K562 (cell line): ENCODE measurements at regions of chr4 and their contacts with region 1.

Region 1: GRCh38 chr4:107579099-107579498 is 140.9 kb downstream of the PAPSS1 start:
- DNase-seq: peak in 2 of 4 experiments; percentile 25 to 26
- ATAC-seq: peak; percentile 95
- H3K4me3 ChIP-seq: no peak overlapping the region
- H3K27ac ChIP-seq: no peak overlapping the region
- H3K4me1 ChIP-seq: peaks cover 0 to 3% of the 10 kb centered on the region in 2 experiments; a peak in 1 of 5 replicates
- H3K27me3 ChIP-seq: peaks cover 0 to 5% of the 10 kb centered on the region in 2 experiments; a peak in 2 of 5 replicates
- CTCF ChIP-seq: peak; percentile 51 to 79 (median 59)
- EP300 ChIP-seq: no peak
- POLR2A ChIP-seq: no peak
- RAD21 ChIP-seq: peak; percentile 67 to 84

Region 2: DNA sequence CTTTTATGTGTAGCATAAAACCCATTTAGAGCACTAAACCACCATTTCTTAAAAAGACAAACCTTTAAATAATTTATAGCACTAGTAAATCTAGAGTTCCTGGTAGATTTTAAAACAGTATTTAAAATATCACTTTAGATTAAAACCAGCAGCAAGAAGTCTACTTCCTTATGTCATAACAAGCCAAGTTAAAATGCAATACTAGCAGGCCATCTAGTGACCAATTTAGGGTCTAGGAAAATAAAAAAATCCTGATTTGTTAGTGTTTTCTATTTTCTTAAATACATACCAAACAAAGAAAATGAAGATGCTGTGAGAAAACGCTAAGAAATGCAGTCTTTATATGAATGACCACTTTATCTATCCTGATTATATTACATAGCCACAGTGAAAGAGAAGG is 87.0 kb after region 1 on chr4:
- CTCF ChIA-PET with region 1: no interaction called
- POLR2A ChIA-PET with region 1: no interaction called
- in situ Hi-C with region 1: no loop called
- intact Hi-C with region 1: loop called (anchors 2 kb)
- DNase-seq: no peak
- ATAC-seq: no peak
- H3K4me3 ChIP-seq: no peak overlapping the region
- H3K27ac ChIP-seq: no peak overlapping the region
- H3K4me1 ChIP-seq: no peaks in the 10 kb centered on the region
- H3K27me3 ChIP-seq: no peaks in the 10 kb centered on the region
- CTCF ChIP-seq: peak in 1 of 3 experiments; percentile 45; a peak in 3 of 6 replicates
- EP300 ChIP-seq: no peak
- POLR2A ChIP-seq: no peak
- RAD21 ChIP-seq: peak; percentile 37 to 65

Region 3: GRCh38 chr4:107699466-107700206 is 120.5 kb after region 1 on chr4:
- CTCF ChIA-PET with region 1: no interaction called
- POLR2A ChIA-PET with region 1: no interaction called
- in situ Hi-C with region 1: no loop called
- intact Hi-C with region 1: no loop called
- DNase-seq: no peak
- ATAC-seq: no peak
- H3K4me3 ChIP-seq: no peak overlapping the region
- H3K27ac ChIP-seq: no peak overlapping the region
- H3K4me1 ChIP-seq: no peaks in the 10 kb centered on the region
- H3K27me3 ChIP-seq: no peaks in the 10 kb centered on the region
- CTCF ChIP-seq: no peak
- EP300 ChIP-seq: no peak
- POLR2A ChIP-seq: no peak
- RAD21 ChIP-seq: no peak

Region 4: GRCh38 chr4:107913281-107913899 is 334.3 kb after region 1 on chr4:
- CTCF ChIA-PET with region 1: no interaction called
- POLR2A ChIA-PET with region 1: no interaction called
- in situ Hi-C with region 1: no loop called
- intact Hi-C with region 1: loop called (anchors 2 kb)
- DNase-seq: peak; percentile 49 to 76 (median 52)
- ATAC-seq: peak; percentile 90
- H3K4me3 ChIP-seq: no peak overlapping the region
- H3K27ac ChIP-seq: no peak overlapping the region
- H3K4me1 ChIP-seq: no peaks in the 10 kb centered on the region
- H3K27me3 ChIP-seq: peaks cover 0 to 2% of the 10 kb centered on the region in 2 experiments; a peak in 1 of 5 replicates
- CTCF ChIP-seq: peak; percentile 66 to 80 (median 66)
- EP300 ChIP-seq: no peak
- POLR2A ChIP-seq: no peak
- RAD21 ChIP-seq: peak; percentile 81 to 82

Region 5: DNA sequence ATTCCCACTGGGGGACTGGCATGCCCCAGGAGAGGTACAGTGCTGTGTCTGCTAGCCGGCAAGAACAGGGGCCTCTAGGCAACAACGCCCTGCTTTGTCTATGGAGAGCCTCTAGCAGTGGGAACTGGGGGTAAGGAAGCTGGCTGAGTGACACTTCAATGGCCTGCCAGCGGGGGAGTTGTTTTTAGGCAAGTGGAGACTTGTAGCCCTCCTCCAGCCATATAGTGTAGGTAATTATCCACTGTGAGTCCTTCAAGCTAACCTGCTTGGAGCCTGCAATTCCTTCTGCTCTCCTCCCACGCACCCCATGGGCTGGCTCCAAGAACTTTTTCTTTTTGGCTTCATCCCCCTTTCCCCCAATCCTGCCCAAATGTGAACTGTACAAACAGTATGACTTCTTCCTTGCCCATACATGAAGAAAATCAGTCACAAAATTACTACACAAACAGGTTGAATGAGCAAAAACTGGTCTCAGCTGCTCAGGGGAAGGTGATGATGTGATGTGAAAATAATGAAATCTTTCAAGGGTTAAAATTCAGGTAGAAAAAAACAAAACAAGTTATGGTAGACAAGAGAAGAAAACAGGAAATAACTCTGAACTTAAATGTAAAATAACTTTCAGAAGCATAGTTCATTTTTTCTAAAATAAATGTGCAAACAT is 556.6 kb after region 1 on chr4:
- CTCF ChIA-PET with region 1: no interaction called
- POLR2A ChIA-PET with region 1: no interaction called
- in situ Hi-C with region 1: no loop called
- intact Hi-C with region 1: no loop called
- DNase-seq: peak; percentile 17 to 54 (median 36)
- ATAC-seq: peak; percentile 90
- H3K4me3 ChIP-seq: no peak overlapping the region
- H3K27ac ChIP-seq: no peak overlapping the region
- H3K4me1 ChIP-seq: peaks cover 4 to 5% of the 10 kb centered on the region in 2 experiments; a peak in 3 of 5 replicates
- H3K27me3 ChIP-seq: no peaks in the 10 kb centered on the region
- CTCF ChIP-seq: peak in 2 of 3 experiments; percentile 5 to 20; a peak in 2 of 6 replicates
- EP300 ChIP-seq: no peak
- POLR2A ChIP-seq: no peak
- RAD21 ChIP-seq: no peak